ENCODE measurements at regions of chr3 and their contacts with region 1.

Region 1: DNA sequence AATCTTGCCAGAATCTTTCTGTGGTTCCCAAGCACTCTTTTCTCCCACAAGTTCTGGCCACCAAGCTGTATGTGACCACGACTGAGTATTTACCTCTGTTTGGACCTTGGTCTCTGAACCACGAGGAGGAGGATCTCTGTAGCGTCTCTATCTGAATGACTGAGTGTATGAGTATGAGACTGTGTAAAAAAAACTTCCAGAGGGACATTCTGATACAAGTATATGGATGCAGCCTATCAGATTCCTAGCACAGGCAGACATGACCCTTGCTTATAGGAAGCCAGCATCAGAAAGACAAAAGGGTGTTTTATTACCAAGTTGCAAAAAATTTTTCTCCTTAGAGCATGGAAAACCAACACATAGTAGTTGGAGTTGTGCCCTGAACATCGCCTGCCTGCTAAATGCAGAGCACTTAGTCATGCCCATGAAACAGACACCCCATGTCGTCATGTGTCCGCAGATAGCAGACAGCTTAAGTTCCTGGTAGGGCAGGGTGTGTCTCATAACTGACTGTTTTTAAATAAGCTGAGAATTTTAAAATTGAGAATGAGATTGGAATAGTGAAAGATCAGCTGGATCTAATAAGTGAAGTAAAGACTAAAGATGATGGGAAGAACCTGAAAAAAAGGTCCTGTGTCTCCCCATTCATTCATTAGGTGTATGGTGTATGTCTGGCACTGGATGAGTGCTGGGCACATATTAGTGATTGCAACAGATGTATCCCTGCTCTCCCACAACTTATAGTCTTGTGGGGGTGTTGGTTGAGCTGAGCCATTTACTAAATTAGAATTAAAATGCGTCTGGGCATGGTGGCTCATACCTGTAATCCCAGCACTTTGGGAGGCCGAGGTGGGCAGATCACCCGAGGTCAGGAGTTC is 30.9 kb downstream of the DAG1 start:
- DNase-seq: peak; percentile 46 to 65
- H3K4me3 ChIP-seq: no peak overlapping the region
- H3K27ac ChIP-seq: peak overlapping the region; percentile 27; the same call in 1 of the 2 replicates
- H3K4me1 ChIP-seq: no peaks in the 10 kb centered on the region
- H3K27me3 ChIP-seq: no peaks in the 10 kb centered on the region
- CTCF ChIP-seq: no peak

Region 2: DNA sequence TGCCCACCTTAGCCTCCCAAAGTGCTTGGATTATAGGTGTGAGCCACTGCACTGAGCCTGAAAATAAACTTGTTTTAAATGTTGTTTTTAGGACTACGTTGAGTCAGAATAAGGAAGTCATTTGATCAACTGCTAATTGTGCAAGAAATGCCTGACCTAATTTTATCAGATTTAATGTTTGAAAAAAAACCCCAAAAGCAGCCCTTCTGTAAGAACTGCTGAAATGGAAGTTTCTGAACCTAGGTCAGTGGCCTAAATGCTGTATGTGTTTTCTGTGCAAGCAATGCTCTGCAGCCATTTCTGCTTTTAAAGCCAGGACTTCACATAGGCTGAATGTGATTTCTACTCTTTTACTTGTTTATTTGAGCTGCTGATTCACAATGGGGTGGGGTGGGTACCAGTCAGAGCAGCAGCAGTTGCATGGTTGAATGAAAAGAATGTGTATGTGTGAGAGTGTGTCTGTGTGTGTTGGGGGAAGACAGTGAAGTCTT is 149.4 kb before region 1 on chr3:
- CTCF ChIA-PET with region 1: no interaction called
- POLR2A ChIA-PET with region 1: interaction called, 12 read pairs
- intact Hi-C with region 1: no loop called
- DNase-seq: peak; percentile 53 to 88
- H3K4me3 ChIP-seq: no peak overlapping the region; the same call in 1 of the 2 replicates
- H3K27ac ChIP-seq: peak overlapping the region; percentile 81
- H3K4me1 ChIP-seq: peaks cover 69% of the 10 kb centered on the region
- H3K27me3 ChIP-seq: no peaks in the 10 kb centered on the region
- CTCF ChIP-seq: no peak

Region 3: DNA sequence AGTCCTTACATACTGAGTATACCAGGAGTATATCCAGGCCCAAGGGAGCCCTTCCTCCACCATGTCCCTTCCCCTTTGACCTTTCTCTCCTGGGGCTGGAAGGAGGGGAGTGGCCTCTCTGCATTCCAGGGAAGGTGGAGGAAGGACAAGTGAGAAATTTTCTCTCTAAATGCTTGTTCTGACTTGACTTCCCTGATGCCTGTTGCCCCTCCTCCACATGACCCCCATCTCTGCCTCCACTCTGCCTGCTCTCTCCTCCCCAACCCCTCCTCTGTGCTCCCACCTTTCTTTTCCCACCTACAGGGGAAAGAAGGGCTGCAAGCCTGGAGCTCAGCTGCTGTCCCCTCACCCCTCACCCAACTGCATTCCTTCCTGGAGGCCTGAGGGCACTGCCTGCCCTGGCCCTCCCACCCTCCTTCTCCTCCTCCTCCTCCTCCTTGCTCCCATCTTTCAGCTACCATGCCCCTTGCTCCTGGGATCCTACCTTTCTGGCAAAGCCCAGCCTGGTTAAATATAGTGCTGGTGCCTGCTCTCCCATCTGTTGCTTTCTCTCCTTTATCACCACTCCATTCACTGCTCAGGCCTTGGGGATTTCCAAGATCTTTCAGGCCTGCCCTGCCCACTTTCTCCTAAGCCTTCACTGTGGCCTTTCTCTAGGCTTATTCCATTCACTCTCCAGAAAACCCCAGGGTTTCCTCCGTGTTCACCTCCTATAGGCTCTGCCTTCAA is 39.4 kb before region 1 on chr3:
- CTCF ChIA-PET with region 1: no interaction called
- POLR2A ChIA-PET with region 1: no interaction called
- intact Hi-C with region 1: loop called (anchors 5 kb)
- DNase-seq: peak; percentile 65 to 80
- H3K4me3 ChIP-seq: peak overlapping the region; percentile 33; the same call in 1 of the 2 replicates
- H3K27ac ChIP-seq: peak overlapping the region; percentile 84
- H3K4me1 ChIP-seq: peaks cover 68% of the 10 kb centered on the region
- H3K27me3 ChIP-seq: no peaks in the 10 kb centered on the region
- CTCF ChIP-seq: no peak

Measured in PC-9 (cell line).